ENCODE measurements at regions of chr7 and their contacts with region 1.

Region 1: GRCh38 chr7:146090023-146090645 is 26.5 kb upstream of the CNTNAP2 start:
- DNase-seq: no peak
- ATAC-seq: no peak

Region 2: GRCh38 chr7:145036604-145037405 is 1053.3 kb before region 1 on chr7:
- intact Hi-C with region 1: loop called (anchors 10 kb)
- DNase-seq: peak; percentile 42
- ATAC-seq: peak; percentile 46

Measured in Right ventricle myocardium superior (tissue), 1 donor.